ENCODE measurements at regions of chr7 and their contacts with region 1.

Region 1: GRCh38 chr7:13910805-13911551 is 78.5 kb downstream of the ETV1 start:
- DNase-seq: no peak
- H3K4me3 Mint-ChIP-seq: no peak overlapping the region
- H3K27ac Mint-ChIP-seq: no peak overlapping the region
- H3K4me1 Mint-ChIP-seq: peaks cover 35% of the 10 kb centered on the region
- H3K27me3 Mint-ChIP-seq: no peaks in the 10 kb centered on the region

Region 2: GRCh38 chr7:13850185-13850752 is 60.7 kb before region 1 on chr7:
- CTCF ChIA-PET with region 1: no interaction called
- POLR2A ChIA-PET with region 1: no interaction called
- intact Hi-C with region 1: loop called (anchors 2 kb)
- DNase-seq: peak; percentile 63
- H3K4me3 Mint-ChIP-seq: no peak overlapping the region
- H3K27ac Mint-ChIP-seq: no peak overlapping the region
- H3K4me1 Mint-ChIP-seq: peaks cover 17% of the 10 kb centered on the region
- H3K27me3 Mint-ChIP-seq: no peaks in the 10 kb centered on the region

Region 3: DNA sequence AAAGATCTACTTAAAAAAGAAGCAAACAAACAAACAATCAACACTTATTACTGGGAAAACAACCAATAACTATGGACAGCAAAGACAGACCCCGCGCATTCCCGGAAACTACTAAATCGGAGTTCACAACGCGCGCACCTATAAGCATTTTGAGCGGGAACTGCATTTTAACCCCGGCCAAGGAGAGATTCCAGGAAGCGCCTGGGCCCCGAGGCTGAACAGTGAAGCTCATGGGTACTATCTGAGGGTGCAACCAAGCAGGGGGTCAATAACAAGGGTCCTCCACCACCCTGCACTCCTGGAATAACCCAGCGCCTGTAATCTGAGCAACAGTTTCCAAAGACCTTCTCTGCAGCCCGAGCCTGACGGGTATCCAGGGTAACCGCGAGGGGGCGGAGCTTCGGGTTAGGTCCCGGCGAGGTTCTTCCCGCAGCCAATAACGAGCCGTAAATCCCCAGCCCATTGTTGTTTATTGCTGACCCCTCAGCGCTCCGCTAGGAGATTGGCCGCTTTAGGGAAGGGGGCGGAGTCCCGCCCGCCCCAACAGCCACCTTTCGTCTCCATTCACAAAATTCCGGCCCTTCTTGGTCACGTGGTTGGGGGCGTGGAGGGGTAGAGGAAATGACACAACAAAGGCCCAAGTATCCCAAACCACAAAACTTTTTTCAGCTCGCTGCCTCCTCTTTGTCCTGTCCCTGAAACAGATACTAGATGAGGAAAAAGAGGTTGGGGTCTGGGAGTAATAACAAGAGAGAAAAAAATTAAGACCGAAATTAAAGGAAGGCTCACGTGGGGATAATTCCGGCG is 80.2 kb after region 1 on chr7:
- CTCF ChIA-PET with region 1: no interaction called
- POLR2A ChIA-PET with region 1: no interaction called
- intact Hi-C with region 1: loop called (anchors 2 kb)
- DNase-seq: peak; percentile 83
- H3K4me3 Mint-ChIP-seq: no peak overlapping the region
- H3K27ac Mint-ChIP-seq: no peak overlapping the region
- H3K4me1 Mint-ChIP-seq: no peaks in the 10 kb centered on the region
- H3K27me3 Mint-ChIP-seq: peaks cover 3% of the 10 kb centered on the region